Activated T-helper 1 cell treated with anti-CD3 and anti-CD28 coated beads, Interleukin-12 subunit alpha, Interleukin-12 subunit beta, Interleukin-2, Interleukin-4 antibody, amounts not matched to agents 30 ng/mL and 10 ng/mL and 1 ng/mL, durations not matched to agents 14 hours and 24 hours and 36 hours (primary cell): ENCODE measurements at regions of chr19 and their contacts with region 1.

Region 1: GRCh38 chr19:54390942-54391577 is 24.2 kb upstream of the TTYH1 start:
- DNase-seq: peak; percentile 35
- H3K4me3 Mint-ChIP-seq: peak overlapping the region; percentile 57
- H3K27ac Mint-ChIP-seq: peak overlapping the region; percentile 31
- H3K4me1 Mint-ChIP-seq: peaks cover 38% of the 10 kb centered on the region
- H3K27me3 Mint-ChIP-seq: peaks cover 13% of the 10 kb centered on the region

Region 2: GRCh38 chr19:54231077-54231931 is 159.8 kb before region 1 on chr19:
- intact Hi-C with region 1: loop called (anchors 5 kb)
- DNase-seq: peak; percentile 77
- H3K4me3 Mint-ChIP-seq: no peak overlapping the region
- H3K27ac Mint-ChIP-seq: no peak overlapping the region
- H3K4me1 Mint-ChIP-seq: peaks cover 6% of the 10 kb centered on the region
- H3K27me3 Mint-ChIP-seq: peaks cover 43% of the 10 kb centered on the region

Region 3: GRCh38 chr19:54325194-54325621 is 65.9 kb before region 1 on chr19:
- intact Hi-C with region 1: loop called (anchors 1 kb)
- DNase-seq: peak; percentile 27
- H3K4me3 Mint-ChIP-seq: no peak overlapping the region
- H3K27ac Mint-ChIP-seq: no peak overlapping the region
- H3K4me1 Mint-ChIP-seq: peaks cover 17% of the 10 kb centered on the region
- H3K27me3 Mint-ChIP-seq: peaks cover 22% of the 10 kb centered on the region

Region 4: GRCh38 chr19:54355675-54356074 is 35.4 kb before region 1 on chr19:
- intact Hi-C with region 1: loop called (anchors 2 kb)
- DNase-seq: no peak
- H3K4me3 Mint-ChIP-seq: no peak overlapping the region
- H3K27ac Mint-ChIP-seq: no peak overlapping the region
- H3K4me1 Mint-ChIP-seq: peaks cover 4% of the 10 kb centered on the region
- H3K27me3 Mint-ChIP-seq: peaks cover 5% of the 10 kb centered on the region

Region 5: DNA sequence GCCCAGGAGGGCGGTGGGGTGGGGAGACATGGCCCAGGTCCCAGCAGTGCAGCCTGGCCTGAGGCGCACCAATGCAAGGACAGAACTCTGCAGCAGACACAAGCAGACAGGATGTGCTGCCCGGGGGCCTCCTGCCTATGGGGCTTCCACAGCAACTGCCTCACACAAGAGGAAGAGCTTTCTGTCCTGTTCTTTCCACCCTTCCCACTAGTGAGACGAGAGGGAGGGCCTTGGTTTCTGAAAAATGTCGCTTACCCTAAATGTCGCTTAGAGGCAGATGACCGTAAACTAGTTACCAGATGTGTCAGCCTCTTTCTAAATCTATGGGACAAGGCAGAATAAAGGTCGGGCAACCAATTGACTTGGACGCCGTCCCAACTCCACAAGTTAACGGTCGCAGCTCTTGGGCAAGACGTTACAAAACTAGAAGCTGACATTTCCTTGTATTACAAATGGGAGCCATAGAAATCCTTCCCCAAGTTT is 26.2 kb before region 1 on chr19 and contains the start of gene LAIR1:
- intact Hi-C with region 1: loop called (anchors 1 kb)
- DNase-seq: peak; percentile 37
- H3K4me3 Mint-ChIP-seq: peak within 1 kb of the TSS; percentile 88
- H3K27ac Mint-ChIP-seq: peak within 1 kb of the TSS; percentile 84
- H3K4me1 Mint-ChIP-seq: peaks cover 61% of the 10 kb centered on the region
- H3K27me3 Mint-ChIP-seq: peaks cover 13% of the 10 kb centered on the region
- total RNA-seq, gene LAIR1: 9.2 and 9.4 TPM in 2 replicates

Region 6: GRCh38 chr19:54373781-54374631 is 17.1 kb before region 1 on chr19:
- intact Hi-C with region 1: loop called (anchors 2 kb)
- DNase-seq: no peak
- H3K4me3 Mint-ChIP-seq: peak overlapping the region; percentile 87
- H3K27ac Mint-ChIP-seq: peak overlapping the region; percentile 18
- H3K4me1 Mint-ChIP-seq: peaks cover 76% of the 10 kb centered on the region
- H3K27me3 Mint-ChIP-seq: peaks cover 23% of the 10 kb centered on the region